Tibial artery (tissue), 4 donors: ENCODE measurements at regions of chr6 and their contacts with region 1.

Region 1: DNA sequence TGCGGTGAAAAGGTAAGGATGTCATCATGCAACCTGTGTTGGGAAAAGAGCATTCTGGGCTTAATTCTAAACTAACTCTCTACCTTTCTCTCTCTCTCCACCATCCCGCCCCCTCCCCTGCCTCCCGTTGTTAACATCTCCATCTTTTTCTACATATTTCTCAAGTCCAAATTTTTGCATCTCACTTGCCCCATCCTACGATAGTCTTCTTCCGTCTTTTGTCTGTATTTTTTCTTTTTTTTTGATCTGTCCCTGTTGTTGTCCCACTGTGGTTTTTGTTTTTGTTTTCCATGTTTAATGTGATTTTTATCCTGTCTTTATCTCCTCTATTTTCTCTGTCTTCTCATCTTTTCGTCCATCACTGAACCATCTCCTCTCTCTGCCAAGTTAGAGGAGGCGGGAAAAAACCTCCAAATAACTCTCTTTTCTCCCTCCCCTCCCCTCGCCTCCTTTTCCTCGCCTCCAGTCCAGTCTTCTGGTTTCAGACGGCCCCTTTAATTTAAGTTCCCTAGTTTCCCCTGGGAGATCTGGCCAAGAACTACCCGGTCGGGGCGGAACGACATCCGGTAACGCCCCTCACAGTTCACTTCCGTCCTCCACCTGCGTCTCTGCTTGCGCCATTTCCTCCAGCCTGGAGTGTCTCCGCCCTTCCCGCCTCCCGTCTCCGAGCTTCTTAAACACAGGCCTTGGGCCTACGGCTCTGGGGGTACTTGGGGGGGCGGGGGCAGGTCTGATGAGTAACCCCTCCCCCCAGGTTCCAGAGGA is at the start of gene NFKBIL1:
- DNase-seq: peak; percentile 98 to 99
- H3K4me3 ChIP-seq: peak within 1 kb of the TSS; percentile 46 to 54
- H3K27ac ChIP-seq: peak within 1 kb of the TSS; percentile 72 to 74
- H3K4me1 ChIP-seq: peaks cover 0 to 42% (median 24%) of the 10 kb centered on the region in 4 donors
- H3K27me3 ChIP-seq: no peaks in the 10 kb centered on the region
- CTCF ChIP-seq: peak in 1 of 2 experiments; percentile 3

Region 2: GRCh38 chr6:31597006-31597405 is 49.9 kb after region 1 on chr6:
- intact Hi-C with region 1: loop called (anchors 2 kb)
- DNase-seq: no peak
- H3K4me3 ChIP-seq: no peak overlapping the region
- H3K27ac ChIP-seq: no peak overlapping the region
- H3K4me1 ChIP-seq: no peaks in the 10 kb centered on the region
- H3K27me3 ChIP-seq: no peaks in the 10 kb centered on the region
- CTCF ChIP-seq: peak in 1 of 2 experiments; percentile 38

Region 3: DNA sequence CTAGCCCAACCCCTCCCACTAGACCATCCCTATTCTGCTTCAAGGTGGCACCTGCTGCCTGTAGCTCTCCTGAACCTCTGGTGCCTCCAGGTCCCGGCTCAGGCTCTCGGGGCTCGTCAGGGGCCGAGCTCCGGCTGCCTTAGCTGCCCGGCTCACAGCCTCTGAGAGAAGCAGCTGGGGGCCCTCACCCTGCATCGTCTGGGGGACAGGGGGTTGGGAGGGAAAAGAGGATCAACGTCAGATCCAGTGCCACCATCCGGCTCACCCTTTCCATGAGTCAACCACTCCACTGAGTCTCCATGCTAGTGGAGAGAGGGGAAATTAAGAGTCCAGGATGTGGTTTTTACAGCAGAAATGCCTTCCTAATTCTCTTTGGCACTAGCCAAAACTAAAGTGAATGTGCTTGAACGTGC is 92.3 kb after region 1 on chr6:
- intact Hi-C with region 1: no loop called
- DNase-seq: no peak
- H3K4me3 ChIP-seq: no peak overlapping the region
- H3K27ac ChIP-seq: no peak overlapping the region
- H3K4me1 ChIP-seq: no peaks in the 10 kb centered on the region
- H3K27me3 ChIP-seq: no peaks in the 10 kb centered on the region
- CTCF ChIP-seq: no peak